ENCODE measurements at regions of chr1 and their contacts with region 1.

Region 1: GRCh38 chr1:113140588-113141446 is 67.8 kb downstream of the LRIG2 start:
- DNase-seq: peak; percentile 86
- H3K4me3 Mint-ChIP-seq: no peak overlapping the region
- H3K27ac Mint-ChIP-seq: no peak overlapping the region
- H3K4me1 Mint-ChIP-seq: peaks cover 18% of the 10 kb centered on the region
- H3K27me3 Mint-ChIP-seq: no peaks in the 10 kb centered on the region

Region 2: DNA sequence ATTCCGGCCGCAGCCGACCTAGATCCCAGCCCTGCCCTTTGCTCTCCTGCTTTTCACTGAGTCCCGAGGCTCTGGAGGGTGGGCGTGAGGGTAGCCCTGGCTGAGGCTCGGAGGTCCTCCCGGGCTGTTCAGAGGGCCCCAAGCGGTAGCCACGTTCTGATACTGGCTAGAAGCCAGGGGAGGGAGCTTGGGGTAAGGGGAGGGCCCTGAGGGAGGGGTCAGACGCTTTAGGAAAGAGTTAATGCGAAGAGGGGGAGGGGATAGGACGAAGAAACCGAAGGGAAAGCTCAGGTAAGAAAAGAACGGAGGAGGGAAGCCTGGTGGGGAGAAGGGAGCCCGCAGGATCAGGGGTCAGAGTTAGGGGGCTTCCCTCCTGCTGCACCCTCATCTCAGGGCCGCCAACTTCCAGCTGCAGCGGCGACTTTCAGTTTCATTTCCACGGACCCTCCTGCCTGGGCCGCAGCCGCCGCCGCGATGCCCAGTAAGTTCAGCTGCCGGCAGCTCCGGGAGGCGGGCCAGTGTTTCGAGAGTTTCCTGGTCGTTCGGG is 466.3 kb before region 1 on chr1 and contains the start of gene MOV10:
- intact Hi-C with region 1: no loop called
- DNase-seq: peak; percentile 91
- H3K4me3 Mint-ChIP-seq: peak within 1 kb of the TSS; percentile 97
- H3K27ac Mint-ChIP-seq: peak within 1 kb of the TSS; percentile 98
- H3K4me1 Mint-ChIP-seq: peaks cover 38% of the 10 kb centered on the region
- H3K27me3 Mint-ChIP-seq: no peaks in the 10 kb centered on the region
- total RNA-seq, gene MOV10: 70.7 and 76.7 TPM in 2 replicates

Region 3: DNA sequence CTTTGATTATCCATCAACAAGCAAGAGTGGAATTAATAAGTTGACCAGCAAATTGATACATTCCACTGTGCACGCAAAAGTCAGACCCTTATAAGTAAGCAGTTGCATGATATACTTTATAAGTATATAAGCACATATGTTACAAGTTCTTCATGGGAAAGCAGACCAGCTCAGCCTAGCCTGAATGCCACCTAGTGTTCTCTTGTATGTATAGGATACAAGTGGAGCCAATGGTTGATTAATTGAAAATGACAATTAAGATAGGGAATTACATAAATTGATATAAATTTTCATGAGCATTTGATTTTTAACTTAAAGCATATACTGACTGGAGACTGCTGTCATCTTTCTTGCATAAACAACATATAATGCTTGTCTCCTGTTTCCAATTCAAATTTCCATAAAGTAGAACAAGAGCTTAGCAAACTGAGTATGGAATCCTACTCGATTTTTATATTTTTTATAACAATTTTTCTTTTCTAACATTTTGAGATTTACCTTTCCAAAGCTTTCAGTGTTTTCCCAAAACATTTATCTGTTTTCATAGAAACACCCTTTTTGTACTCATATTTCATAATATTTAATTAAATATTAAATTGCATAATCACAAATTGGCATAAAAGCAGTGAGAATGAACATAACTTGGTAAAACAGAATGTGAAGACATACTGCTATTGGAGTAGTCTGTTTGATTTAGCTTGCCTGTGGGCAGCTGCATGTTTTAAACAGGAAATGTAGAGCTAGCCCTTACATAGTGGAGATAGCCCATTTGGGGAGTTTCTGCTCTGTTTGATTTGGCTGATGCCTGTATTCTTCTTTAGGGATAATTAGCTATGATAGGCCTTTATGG is 312.3 kb after region 1 on chr1:
- intact Hi-C with region 1: loop called (anchors 2 kb)
- DNase-seq: peak; percentile 58
- H3K4me3 Mint-ChIP-seq: no peak overlapping the region
- H3K27ac Mint-ChIP-seq: no peak overlapping the region
- H3K4me1 Mint-ChIP-seq: no peaks in the 10 kb centered on the region
- H3K27me3 Mint-ChIP-seq: peaks cover 4% of the 10 kb centered on the region

Region 4: GRCh38 chr1:113677250-113678158 is 536.7 kb after region 1 on chr1:
- intact Hi-C with region 1: loop called (anchors 1 kb)
- DNase-seq: peak; percentile 65
- H3K4me3 Mint-ChIP-seq: no peak overlapping the region
- H3K27ac Mint-ChIP-seq: no peak overlapping the region
- H3K4me1 Mint-ChIP-seq: peaks cover 10% of the 10 kb centered on the region
- H3K27me3 Mint-ChIP-seq: no peaks in the 10 kb centered on the region

Measured in activated CD4-positive, alpha-beta T cell treated with anti-CD3 and anti-CD28 coated beads, Interleukin-2, amount 10 ng/mL, durations not matched to agents 24 days and 14 days (primary cell).